ENCODE measurements at regions of chr13 and their contacts with region 1.

Region 1: GRCh38 chr13:38686577-38687245 is at the start of gene FREM2:
- DNase-seq: no peak
- H3K4me3 ChIP-seq: peak within 1 kb of the TSS; percentile 47 to 57 (median 48)
- H3K27ac ChIP-seq: no peak within 1 kb of the TSS
- H3K4me1 ChIP-seq: peaks cover 5 to 28% (median 23%) of the 10 kb centered on the region in 4 donors
- H3K27me3 ChIP-seq: peaks cover 0 to 44% (median 10%) of the 10 kb centered on the region in 4 donors
- CTCF ChIP-seq: no peak
- EP300 ChIP-seq: no peak
- POLR2A ChIP-seq: no peak
- total RNA-seq, gene FREM2: 0.13 to 0.34 (median 0.33) TPM in 3 of 4 donors, not detected in the other

Region 2: GRCh38 chr13:38763439-38764381 is 77.0 kb after region 1 on chr13:
- intact Hi-C with region 1: loop called (anchors 10 kb)
- DNase-seq: no peak
- H3K4me3 ChIP-seq: no peak overlapping the region
- H3K27ac ChIP-seq: no peak overlapping the region
- H3K4me1 ChIP-seq: no peaks in the 10 kb centered on the region
- H3K27me3 ChIP-seq: peaks cover 0 to 2% (median 0%) of the 10 kb centered on the region in 4 donors
- CTCF ChIP-seq: peak; percentile 49 to 60 (median 50)
- EP300 ChIP-seq: no peak
- POLR2A ChIP-seq: no peak

Region 3: DNA sequence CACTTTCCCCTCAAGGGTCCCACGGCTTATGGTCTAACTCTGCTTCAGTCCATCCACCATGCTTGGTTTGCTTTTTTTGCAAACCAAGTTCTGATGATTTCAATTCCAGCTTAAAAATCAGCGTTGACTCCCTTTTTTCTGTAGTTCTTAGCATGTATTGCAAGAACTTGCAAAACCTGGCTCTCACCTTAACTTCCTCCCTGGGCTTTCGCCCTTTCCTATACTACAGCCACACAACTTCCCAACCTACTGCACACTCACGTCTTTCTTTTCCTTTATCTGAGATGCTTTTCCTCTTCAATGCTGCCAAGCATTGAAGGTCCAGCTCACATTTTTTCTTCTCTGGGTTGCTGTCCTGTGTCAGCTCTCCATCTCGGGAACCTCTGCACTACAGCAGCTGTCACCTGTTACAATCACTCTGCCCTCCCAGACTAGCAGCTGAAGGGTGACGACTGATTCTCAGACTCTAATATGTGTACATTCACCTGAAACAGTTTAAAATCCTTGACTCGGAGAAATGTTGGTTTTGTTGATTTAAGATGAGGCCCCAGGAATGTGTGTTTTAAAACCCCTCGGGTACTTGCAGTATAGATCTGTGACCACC is 143.8 kb after region 1 on chr13:
- intact Hi-C with region 1: no loop called
- DNase-seq: no peak
- H3K4me3 ChIP-seq: no peak overlapping the region
- H3K27ac ChIP-seq: no peak overlapping the region
- H3K4me1 ChIP-seq: no peaks in the 10 kb centered on the region
- H3K27me3 ChIP-seq: no peaks in the 10 kb centered on the region
- CTCF ChIP-seq: no peak
- EP300 ChIP-seq: no peak
- POLR2A ChIP-seq: no peak